ENCODE measurements at regions of chr14 and their contacts with region 1.

Region 1: GRCh38 chr14:23186913-23187654 is 3.6 kb upstream of the SLC7A8 start:
- DNase-seq: no peak
- H3K4me3 ChIP-seq: no peak overlapping the region
- CTCF ChIP-seq: peak; percentile 66

Region 2: GRCh38 chr14:23076785-23077408 is 110.2 kb before region 1 on chr14:
- CTCF ChIA-PET with region 1: interaction called, 18 read pairs
- POLR2A ChIA-PET with region 1: no interaction called
- DNase-seq: no peak
- H3K4me3 ChIP-seq: no peak overlapping the region
- CTCF ChIP-seq: no peak

Region 3: GRCh38 chr14:23141671-23142451 is 45.2 kb before region 1 on chr14:
- CTCF ChIA-PET with region 1: interaction called, 21 read pairs
- POLR2A ChIA-PET with region 1: no interaction called
- DNase-seq: no peak
- H3K4me3 ChIP-seq: no peak overlapping the region
- CTCF ChIP-seq: no peak

Region 4: GRCh38 chr14:23160924-23161538 is 26.1 kb before region 1 on chr14:
- CTCF ChIA-PET with region 1: interaction called, 67 read pairs
- POLR2A ChIA-PET with region 1: no interaction called
- DNase-seq: no peak
- H3K4me3 ChIP-seq: no peak overlapping the region
- CTCF ChIP-seq: no peak

Region 5: DNA sequence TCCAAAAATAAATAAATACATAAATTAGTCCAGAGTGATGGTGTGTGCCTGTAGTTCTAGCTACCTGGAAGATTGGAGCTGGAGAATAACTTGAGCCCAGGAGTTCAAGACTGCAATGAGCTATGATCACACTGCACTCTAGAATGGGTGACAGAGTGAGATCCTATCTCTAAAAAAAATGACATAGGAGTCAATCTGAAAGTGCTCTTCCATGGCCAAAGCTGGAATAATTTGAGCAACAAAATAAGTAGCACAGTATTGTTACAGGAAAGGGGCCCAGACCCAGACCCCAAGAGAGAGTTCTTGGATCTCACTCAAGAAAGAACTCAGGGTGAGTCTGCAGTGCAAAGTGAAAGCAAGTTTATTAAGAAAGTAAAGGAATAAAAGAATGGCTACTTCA is 21.2 kb after region 1 on chr14:
- CTCF ChIA-PET with region 1: interaction called, 20 read pairs
- POLR2A ChIA-PET with region 1: no interaction called
- DNase-seq: no peak
- H3K4me3 ChIP-seq: no peak overlapping the region
- CTCF ChIP-seq: no peak